Common myeloid progenitor, CD34-positive (primary cell): ENCODE measurements at regions of chr6 and their contacts with region 1.

Region 1: DNA sequence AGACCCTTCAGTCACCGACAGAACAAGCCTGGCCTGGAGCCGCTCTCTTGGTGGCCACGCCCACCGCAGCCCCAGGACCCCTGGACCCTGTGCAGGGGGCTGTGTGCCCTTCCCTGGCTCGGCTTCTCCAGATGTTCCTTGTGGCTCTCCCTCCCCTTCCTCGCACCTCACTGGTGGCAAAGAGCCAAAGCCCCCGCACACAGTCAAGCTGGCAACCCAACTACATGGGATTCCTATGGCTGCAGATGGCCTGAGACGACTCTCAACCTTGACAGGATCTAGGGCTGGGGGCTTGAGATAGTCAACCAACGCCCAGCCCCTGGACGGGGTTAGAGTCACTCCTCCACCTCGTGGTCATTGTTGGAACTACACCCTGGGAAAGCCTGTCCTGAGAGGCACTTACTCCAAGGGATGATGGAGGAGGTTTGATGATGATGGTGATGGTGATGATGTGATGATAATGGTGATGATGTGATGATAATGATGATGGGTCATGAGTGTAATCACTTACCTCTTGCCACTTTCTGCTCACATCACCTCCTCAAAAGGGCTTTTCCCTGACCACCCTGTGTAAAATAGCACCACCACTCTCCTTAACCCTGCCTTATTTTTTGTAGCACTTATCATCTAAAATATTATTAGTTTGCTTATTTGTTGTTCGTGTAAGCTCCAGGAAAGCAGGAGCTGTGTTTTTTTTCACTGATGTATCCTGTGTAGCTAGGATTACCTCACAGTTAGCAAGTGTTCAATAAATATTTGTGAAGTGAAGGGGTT is 278.4 kb downstream of the LRFN2 start:
- DNase-seq: peak; percentile 57 to 77 (median 75)
- H3K4me3 ChIP-seq: no peak overlapping the region
- H3K27ac ChIP-seq: no peak overlapping the region
- H3K4me1 ChIP-seq: peaks cover 0 to 5% (median 0%) of the 10 kb centered on the region in 4 experiments
- H3K27me3 ChIP-seq: peaks cover 0 to 32% (median 17%) of the 10 kb centered on the region in 5 experiments

Region 2: DNA sequence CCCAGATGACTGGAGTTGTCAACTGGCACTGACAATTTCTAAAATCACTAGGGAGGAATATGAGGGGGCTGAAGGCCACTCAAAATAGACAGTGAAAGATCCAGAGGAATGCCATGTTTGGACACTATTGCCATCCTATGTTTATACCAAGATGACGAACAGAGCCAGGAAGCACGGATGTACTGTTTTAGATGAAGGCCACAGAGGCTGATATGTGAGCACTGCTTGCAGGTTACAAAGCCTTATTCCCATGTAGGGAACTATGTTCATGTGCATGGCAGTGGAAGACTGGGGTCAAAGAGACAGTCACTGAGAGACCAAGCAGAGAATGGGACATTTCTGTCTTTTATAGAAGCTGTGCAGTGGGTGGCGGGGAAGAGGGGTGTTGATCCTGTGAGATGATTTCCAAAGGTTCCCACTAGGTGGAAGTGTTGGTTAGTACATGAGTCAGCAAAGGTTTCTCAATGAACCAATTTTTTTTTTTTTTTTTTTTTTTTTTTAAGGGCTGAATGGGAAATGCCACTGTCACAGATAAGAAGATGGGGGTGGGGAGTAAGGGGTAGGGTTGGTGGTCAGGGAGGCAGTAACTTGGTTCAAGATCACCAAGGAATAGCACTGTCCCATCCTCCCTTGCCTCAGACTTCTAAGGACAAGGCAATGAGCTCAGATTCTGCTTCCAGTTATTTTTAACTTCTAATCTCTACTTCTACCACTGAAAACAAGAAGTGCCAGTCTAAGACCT is 327.7 kb before region 1 on chr6:
- CTCF ChIA-PET with region 1: interaction called, 13 read pairs
- POLR2A ChIA-PET with region 1: interaction called, 3 read pairs
- DNase-seq: peak; percentile 62 to 81 (median 77)
- H3K4me3 ChIP-seq: no peak overlapping the region
- H3K27ac ChIP-seq: no peak overlapping the region
- H3K4me1 ChIP-seq: peaks cover 0 to 9% (median 0%) of the 10 kb centered on the region in 4 experiments
- H3K27me3 ChIP-seq: peaks cover 0 to 6% (median 0%) of the 10 kb centered on the region in 5 experiments